Head of caudate nucleus (tissue), 42 donors: ENCODE measurements at regions of chr3 and their contacts with region 1.

Region 1: DNA sequence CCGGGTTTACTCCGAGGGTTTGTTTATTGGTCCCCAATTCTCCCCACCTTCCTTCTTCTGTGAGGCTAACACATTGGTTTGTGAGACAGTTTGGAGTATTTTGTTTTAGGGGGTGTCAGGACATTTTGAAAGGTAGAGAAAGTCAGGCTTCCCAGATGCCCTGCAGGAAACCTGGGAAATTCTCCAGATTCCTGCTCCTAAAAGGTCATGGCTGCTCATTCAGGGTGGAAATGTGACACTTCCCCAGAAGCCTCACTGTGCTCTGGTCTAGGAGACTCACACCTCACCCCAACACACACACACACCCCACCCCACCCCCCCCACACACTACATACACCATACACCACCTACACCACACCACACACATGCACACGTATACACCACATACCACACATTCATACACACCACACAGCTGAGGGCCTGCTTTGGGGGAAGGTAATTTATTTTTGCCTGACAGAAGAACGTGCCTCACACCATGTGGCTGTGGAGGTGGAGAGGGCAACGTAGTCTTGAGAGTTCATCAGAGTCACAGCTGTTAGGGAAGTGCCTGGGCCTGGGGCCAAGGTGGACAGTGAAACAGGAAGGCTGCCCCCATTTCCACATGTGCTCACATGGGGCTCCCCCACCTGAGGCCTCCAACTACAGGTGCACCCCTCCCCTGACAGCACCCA is 40.4 kb upstream of the LIMD1 start:
- DNase-seq: peak in 6 of 42 donors; percentile 24 to 54 (median 34)

Region 2: GRCh38 chr3:45409921-45410320 is 144.2 kb before region 1 on chr3:
- intact Hi-C with region 1: no loop called
- DNase-seq: peak in 10 of 42 donors; percentile 15 to 62 (median 35)

Region 3: DNA sequence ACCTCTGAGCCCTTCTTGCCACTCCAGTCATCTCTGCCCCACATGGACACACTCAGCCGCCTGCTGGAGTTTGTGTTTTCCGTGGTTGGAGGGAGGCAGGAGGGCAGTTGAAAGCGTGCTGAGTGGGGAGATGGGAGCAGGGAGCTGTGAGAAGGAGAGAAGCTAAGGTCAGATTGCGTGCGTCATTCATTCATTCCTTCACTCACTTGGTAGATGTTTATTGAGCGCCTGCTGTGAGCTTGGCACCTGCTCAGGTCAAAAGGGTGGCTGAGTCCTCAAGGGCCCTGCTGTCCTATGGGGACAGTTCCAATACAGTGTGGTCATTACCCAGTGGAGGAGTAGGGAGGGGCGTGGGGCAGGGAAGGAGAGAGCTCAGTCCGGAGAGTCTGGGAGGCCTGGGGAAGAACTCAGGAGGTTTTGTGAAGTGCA is 64.0 kb after region 1 on chr3:
- intact Hi-C with region 1: loop called (anchors 2 kb)
- DNase-seq: no peak

Region 4: DNA sequence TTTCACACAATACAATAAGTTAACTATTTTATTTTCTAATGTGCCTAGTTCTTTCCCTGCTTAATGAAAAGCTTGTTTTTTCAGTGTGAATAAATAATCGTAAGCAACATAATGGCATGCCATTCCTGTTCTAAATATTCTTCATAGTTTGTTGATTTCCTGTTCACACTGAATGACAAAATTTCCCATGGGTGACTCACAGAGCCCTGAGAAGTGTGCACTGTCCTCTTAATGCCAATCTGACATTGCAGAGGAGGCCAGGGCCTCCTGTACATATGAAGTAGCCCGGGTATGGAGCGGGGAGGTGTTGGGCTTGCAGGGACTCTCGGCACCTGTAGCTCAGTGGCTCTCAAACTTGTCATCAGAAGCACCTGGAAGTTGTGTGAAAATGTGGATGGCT is 712.5 kb after region 1 on chr3:
- intact Hi-C with region 1: no loop called
- DNase-seq: no peak